ENCODE measurements at regions of chr17 and their contacts with region 1.

Region 1: GRCh38 chr17:55735731-55736405 is 13.2 kb upstream of the TMEM100 start:
- DNase-seq: peak in 1 of 2 donors; percentile 21
- ATAC-seq: no peak
- H3K4me3 ChIP-seq: no peak overlapping the region
- H3K27ac ChIP-seq: no peak overlapping the region
- H3K4me1 ChIP-seq: peaks cover 27 to 39% of the 10 kb centered on the region in 2 donors
- H3K27me3 ChIP-seq: no peaks in the 10 kb centered on the region
- CTCF ChIP-seq: peak; percentile 38 to 67 (median 50)
- POLR2A ChIP-seq: no peak

Region 2: DNA sequence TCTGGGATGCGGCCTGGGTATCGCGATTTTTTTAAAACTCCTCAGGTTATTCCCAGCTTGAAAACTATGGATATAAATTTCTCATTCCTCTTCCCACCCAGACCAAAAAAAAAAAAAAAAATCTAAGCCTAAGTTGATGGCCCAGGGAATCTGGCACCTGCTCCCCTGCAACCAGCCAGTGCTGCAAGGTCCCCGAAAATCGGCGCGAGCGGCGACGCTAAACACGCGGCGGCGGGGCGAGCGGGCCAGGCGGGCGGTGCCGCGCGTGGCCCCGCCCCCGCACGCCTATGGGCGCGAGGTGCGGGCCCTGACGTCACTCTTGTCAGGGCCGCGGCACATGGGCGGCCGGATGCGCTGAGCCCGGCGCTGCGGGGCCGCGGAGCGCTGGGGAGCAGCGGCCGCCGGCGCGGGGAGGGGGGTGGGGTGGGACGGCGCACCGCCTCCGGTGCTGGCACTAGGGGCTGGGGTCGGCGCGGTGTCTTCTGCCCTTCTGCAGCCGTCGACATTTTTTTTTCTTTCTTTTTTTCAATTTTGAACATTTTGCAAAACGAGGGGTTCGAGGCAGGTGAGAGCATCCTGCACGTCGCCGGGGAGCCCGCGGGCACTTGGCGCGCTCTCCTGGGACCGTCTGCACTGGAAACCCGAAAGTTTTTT is 471.1 kb before region 1 on chr17 and contains the start of gene HLF:
- in situ Hi-C with region 1: no loop called
- intact Hi-C with region 1: loop called (anchors 5 kb)
- DNase-seq: peak; percentile 59 to 72
- ATAC-seq: peak; percentile 85
- H3K4me3 ChIP-seq: peak within 1 kb of the TSS; percentile 66 to 88 (median 72)
- H3K27ac ChIP-seq: peak within 1 kb of the TSS; percentile 78 to 92 (median 78)
- H3K4me1 ChIP-seq: peaks cover 19 to 29% of the 10 kb centered on the region in 2 donors
- H3K27me3 ChIP-seq: no peaks in the 10 kb centered on the region
- CTCF ChIP-seq: peak in 2 of 5 experiments; percentile 8 to 19
- POLR2A ChIP-seq: peak; percentile 79 to 82
- total RNA-seq, gene HLF: 7.7 to 14.8 (median 10.4) TPM

Region 3: DNA sequence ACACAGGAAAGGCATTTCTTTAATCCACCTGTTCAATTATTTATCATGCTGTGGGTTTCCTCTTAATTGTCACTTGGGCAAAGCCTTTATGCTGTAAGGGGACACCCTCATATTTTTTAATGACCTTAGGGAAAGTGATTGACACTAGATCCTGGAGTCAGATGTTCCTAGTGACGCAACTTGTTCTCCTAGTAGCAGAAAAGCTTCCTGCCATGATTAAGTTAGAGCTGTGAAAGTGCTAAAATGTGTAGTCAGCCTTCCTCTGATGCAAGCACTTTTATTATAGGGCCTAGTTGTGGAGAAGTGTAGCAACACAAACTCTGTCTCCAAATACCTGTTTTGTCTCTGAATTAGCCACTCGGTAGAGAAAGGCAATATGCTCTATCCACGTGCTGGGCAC is 25.5 kb before region 1 on chr17:
- in situ Hi-C with region 1: no loop called
- intact Hi-C with region 1: loop called (anchors 2 kb)
- DNase-seq: peak; percentile 51 to 60
- ATAC-seq: peak; percentile 88 to 91
- H3K4me3 ChIP-seq: peak overlapping the region in 1 of 4 donors; percentile 44
- H3K27ac ChIP-seq: peak overlapping the region; percentile 88 to 96 (median 94)
- H3K4me1 ChIP-seq: peaks cover 48 to 55% of the 10 kb centered on the region in 2 donors
- H3K27me3 ChIP-seq: no peaks in the 10 kb centered on the region
- CTCF ChIP-seq: no peak
- POLR2A ChIP-seq: no peak

Region 4: GRCh38 chr17:55783684-55784245 is 47.9 kb after region 1 on chr17:
- in situ Hi-C with region 1: no loop called
- intact Hi-C with region 1: loop called (anchors 2 kb)
- DNase-seq: peak; percentile 88 to 95
- ATAC-seq: peak; percentile 93 to 95
- H3K4me3 ChIP-seq: peak overlapping the region in 2 of 4 donors; percentile 9 to 10
- H3K27ac ChIP-seq: peak overlapping the region; percentile 83 to 93 (median 89)
- H3K4me1 ChIP-seq: peaks cover 23 to 32% of the 10 kb centered on the region in 2 donors
- H3K27me3 ChIP-seq: no peaks in the 10 kb centered on the region
- CTCF ChIP-seq: no peak
- POLR2A ChIP-seq: peak in 1 of 2 donors; percentile 70

Region 5: DNA sequence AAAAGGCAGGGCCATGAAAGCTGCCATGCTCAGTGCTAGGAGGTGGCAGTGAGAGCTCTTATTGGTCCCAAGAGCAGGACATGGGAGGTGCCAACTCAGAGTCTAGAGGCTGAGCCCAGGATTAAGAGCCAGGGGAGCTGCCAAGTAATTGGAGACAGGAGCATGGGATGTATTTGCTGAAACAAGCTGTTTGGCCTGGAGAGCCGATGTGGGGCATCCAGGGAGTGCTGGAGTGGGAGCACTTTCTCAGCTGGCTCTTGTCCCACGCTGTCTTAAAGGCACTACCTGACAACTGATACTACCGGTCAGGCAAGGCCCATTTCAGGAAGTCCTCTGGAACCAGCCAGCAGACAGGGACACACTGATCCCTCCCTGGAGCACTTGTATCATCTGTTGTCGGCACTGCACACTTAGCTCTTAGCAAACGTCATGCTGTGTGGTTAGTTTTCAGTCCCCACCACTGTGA is 436.7 kb after region 1 on chr17:
- in situ Hi-C with region 1: no loop called
- intact Hi-C with region 1: loop called (anchors 10 kb)
- DNase-seq: peak; percentile 92 to 94
- ATAC-seq: peak; percentile 82 to 89
- H3K4me3 ChIP-seq: no peak overlapping the region
- H3K27ac ChIP-seq: peak overlapping the region; percentile 85 to 93 (median 86)
- H3K4me1 ChIP-seq: peaks cover 34 to 35% of the 10 kb centered on the region in 2 donors
- H3K27me3 ChIP-seq: no peaks in the 10 kb centered on the region
- CTCF ChIP-seq: no peak
- POLR2A ChIP-seq: peak in 1 of 2 donors; percentile 30

Measured in gastrocnemius medialis (tissue), 4 donors.